Spleen (tissue), 13 donors: ENCODE measurements at regions of chr4 and their contacts with region 1.

Region 1: DNA sequence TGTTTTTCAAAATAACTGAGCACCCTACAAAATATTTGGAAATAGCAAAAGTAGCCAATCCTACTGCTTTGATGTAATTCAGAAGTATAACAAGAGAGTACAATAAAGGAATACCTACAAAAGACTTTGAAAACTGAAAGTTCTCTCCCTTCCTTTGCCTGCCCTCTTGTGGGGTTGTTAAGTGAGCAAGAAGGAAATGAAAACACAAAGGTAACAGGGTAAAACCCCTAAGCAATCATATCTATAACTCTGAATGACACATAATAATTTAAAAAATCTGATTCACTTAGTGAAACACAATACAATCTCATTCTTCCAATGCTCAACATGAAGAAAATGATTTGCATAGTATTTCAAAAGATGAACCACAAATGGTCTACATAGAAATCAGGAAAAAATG is 98.2 kb downstream of the FRYL start:
- DNase-seq: no peak
- H3K4me3 ChIP-seq: no peak overlapping the region
- H3K27ac ChIP-seq: no peak overlapping the region
- H3K4me1 ChIP-seq: peaks cover 2 to 56% (median 22%) of the 10 kb centered on the region in 6 donors
- H3K27me3 ChIP-seq: no peaks in the 10 kb centered on the region
- CTCF ChIP-seq: peak in 7 of 11 experiments; percentile 16 to 44 (median 36)
- POLR2A ChIP-seq: no peak

Region 2: GRCh38 chr4:48578132-48578968 is 103.5 kb before region 1 on chr4:
- intact Hi-C with region 1: loop called (anchors 10 kb)
- DNase-seq: no peak
- H3K4me3 ChIP-seq: no peak overlapping the region
- H3K27ac ChIP-seq: no peak overlapping the region
- H3K4me1 ChIP-seq: peaks cover 0 to 10% (median 2%) of the 10 kb centered on the region in 6 donors
- H3K27me3 ChIP-seq: no peaks in the 10 kb centered on the region
- CTCF ChIP-seq: peak; percentile 65 to 93 (median 87)
- POLR2A ChIP-seq: no peak